AG04449 (cell line): ENCODE measurements at regions of chr18 and their contacts with region 1.

Region 1: GRCh38 chr18:59070181-59070912 is 69.3 kb upstream of the SEC11C start:
- DNase-seq: no peak
- H3K4me3 ChIP-seq: no peak overlapping the region
- CTCF ChIP-seq: peak; percentile 90

Region 2: DNA sequence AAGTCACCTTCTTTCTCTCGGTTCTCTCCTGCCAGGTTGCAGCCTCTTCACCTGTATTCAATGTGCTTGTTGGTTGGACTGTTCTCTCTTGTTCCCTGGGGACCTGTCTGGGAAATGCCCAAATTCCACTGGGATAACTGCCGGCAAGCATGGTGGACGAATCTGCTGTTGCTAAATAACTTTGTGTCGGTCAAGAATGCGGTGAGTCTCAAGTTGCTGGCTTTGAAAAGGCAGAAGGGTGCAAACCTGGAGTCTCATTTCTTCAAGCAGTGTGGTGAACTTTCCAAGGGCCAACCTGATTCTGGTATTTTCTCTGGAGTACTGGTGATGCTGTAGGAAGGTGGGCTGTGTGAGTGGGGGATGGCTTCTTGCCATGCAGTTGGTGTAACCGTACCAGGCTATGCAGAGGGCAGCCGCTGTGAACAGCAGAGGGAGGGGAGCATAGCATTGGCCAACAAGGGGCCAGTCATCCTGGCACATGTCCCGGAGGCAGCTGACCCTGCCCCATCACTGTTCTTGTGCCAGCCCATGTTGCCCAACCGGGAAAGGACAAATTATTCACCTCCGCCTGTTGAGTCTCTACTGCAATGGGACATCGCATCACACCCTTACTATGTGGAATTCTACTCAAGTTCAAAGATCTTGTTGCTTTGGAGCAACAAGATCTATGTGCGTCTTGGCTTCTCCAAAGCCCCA is 18.7 kb before region 1 on chr18:
- CTCF ChIA-PET with region 1: interaction called, 106 read pairs
- POLR2A ChIA-PET with region 1: no interaction called
- DNase-seq: no peak
- H3K4me3 ChIP-seq: no peak overlapping the region
- CTCF ChIP-seq: no peak

Region 3: DNA sequence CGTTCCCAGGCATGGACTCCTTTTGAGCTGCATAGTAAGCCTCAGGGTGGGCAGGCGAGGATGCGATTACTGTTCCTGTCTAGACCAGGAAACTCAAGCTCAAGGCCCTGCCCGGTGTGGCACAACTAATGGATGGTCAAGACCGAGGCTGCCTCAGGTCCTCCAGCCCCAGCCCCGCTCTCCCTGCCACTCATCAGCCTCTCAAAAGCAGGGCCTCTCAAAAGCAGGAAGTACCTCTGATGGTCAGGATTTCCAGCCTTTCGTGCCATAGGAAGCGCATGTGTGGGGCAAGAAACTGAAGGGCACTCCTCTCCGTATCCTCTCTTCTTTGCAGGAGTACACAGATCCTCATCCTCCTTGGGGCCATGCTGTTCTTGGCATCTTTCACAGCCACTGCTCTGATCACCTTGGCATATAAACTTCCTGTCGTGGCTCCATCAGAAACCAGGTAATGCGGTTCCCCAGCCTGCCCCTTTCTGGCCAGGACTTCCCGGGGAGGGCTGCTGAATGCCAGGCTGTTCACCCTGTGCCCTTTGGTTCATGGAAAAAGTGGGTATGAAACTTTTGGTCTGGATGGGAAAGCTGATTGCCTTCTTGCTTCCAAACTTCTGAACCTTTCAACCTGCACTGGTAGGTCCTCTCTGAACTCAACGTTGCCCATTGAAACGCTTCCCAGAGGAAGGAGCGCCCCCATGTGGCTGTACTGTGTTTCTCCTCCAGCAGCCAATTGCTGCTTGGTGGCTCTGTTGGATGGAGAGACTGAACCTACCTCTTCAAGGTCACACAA is 13.4 kb before region 1 on chr18:
- CTCF ChIA-PET with region 1: interaction called, 106 read pairs
- POLR2A ChIA-PET with region 1: no interaction called
- DNase-seq: no peak
- H3K4me3 ChIP-seq: no peak overlapping the region
- CTCF ChIP-seq: peak; percentile 86